Endothelial cell of umbilical vein (primary cell): ENCODE measurements at regions of chr19 and their contacts with region 1.

Region 1: GRCh38 chr19:38618590-38619360 is at the start of gene EIF3K:
- DNase-seq: peak; percentile 99
- H3K4me3 ChIP-seq: peak within 1 kb of the TSS; percentile 44 to 99 (median 73)
- H3K27ac ChIP-seq: peak within 1 kb of the TSS; percentile 65
- H3K4me1 ChIP-seq: peaks cover 14% of the 10 kb centered on the region
- H3K27me3 ChIP-seq: no peaks in the 10 kb centered on the region
- CTCF ChIP-seq: no peak
- POLR2A ChIP-seq: peak; percentile 94
- total RNA-seq, gene EIF3K: 267 and 277 TPM in 2 replicates

Region 2: DNA sequence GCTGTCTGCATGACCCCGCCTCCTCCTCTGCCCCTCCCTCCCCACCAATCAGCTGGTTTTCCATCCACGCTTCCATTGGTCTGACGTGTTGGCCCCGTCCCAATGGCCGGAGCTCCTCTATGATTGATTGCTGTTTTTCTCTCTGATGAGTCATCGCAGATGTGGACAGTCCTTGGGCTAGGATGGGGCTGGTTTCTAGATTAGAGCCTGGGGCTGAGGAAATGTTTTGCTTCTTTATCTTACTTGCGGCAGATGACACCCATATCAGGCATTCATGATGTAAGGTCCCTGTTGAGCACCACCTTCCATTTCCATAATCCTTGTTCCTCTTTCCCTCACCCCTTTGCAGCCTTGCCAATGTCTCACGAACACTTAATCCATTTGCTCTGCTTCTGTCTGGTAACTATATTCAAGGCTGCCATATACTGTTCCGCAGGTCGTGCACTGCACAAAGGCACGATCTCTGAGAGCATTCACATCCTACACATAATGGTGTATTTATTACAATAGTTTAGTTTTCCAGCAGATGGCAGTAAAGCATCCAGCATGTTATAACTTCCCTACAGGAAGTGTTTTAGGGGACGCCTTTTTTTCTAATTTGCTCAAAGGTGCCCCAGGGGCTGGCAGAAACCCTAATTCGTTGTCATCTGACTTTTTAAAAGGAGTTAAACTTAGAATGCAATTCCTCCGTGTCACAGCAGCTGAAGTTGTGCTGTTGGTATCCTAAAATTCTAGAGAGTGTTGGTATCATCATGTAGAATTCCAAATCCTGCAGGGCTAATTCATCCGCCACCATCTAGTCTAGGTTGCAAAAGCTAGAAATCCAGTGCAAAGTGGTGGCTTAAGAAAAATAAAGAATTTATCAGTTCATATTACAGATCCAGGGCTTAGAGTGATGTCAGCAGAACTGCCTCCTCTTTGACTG is 74.5 kb before region 1 on chr19:
- CTCF ChIA-PET with region 1: interaction called, 3 read pairs
- POLR2A ChIA-PET with region 1: no interaction called
- dilution Hi-C with region 1: no loop called
- intact Hi-C with region 1: loop called (anchors 2 kb)
- DNase-seq: peak; percentile 78
- H3K4me3 ChIP-seq: no peak overlapping the region
- H3K27ac ChIP-seq: no peak overlapping the region
- H3K4me1 ChIP-seq: peaks cover 7% of the 10 kb centered on the region
- H3K27me3 ChIP-seq: peaks cover 0 to 2% of the 10 kb centered on the region in 2 experiments
- CTCF ChIP-seq: peak; percentile 30 to 37
- POLR2A ChIP-seq: no peak